AG04449 (cell line): ENCODE measurements at regions of chr17 and their contacts with region 1.

Region 1: DNA sequence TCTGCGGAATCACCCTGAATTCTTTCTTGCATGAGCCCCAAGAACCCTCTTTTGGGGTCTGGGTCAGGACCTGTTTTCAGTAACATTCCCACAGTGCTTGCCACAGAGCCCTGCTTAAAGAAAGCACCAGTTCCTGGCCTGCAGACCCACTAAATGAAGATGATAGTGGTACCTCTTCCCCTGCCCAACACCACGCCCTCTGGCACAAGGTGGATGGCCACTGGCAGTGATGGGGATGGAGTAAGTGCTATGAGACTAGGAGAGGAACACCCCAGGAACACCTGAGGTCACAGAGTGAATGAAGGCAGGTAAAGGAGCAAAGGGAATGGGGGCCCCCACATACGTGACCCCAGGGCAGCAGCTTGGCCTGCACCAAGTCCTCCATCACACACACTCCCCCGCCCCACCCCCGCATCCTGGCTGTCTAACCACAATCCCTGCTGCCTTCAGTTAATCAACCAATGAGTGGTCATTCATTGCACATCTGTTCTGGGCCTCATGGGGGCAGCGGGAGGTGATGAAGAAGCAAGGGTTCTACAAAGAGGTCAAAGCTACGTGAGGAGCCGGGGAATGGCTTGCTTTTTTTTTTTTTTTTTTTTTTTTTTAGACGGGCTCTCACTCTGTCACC is 3.9 kb upstream of the PPY start:
- DNase-seq: no peak
- H3K4me3 ChIP-seq: no peak overlapping the region
- CTCF ChIP-seq: no peak

Region 2: GRCh38 chr17:43645765-43646481 is 300.3 kb before region 1 on chr17:
- CTCF ChIA-PET with region 1: no interaction called
- POLR2A ChIA-PET with region 1: no interaction called
- DNase-seq: no peak
- H3K4me3 ChIP-seq: peak overlapping the region; percentile 27
- CTCF ChIP-seq: no peak

Region 3: GRCh38 chr17:43861024-43861621 is 85.1 kb before region 1 on chr17:
- CTCF ChIA-PET with region 1: no interaction called
- POLR2A ChIA-PET with region 1: no interaction called
- DNase-seq: no peak
- H3K4me3 ChIP-seq: no peak overlapping the region
- CTCF ChIP-seq: no peak

Region 4: GRCh38 chr17:43907425-43907981 is 38.7 kb before region 1 on chr17 and contains the start of gene MPP2:
- CTCF ChIA-PET with region 1: interaction called, 25 read pairs
- POLR2A ChIA-PET with region 1: no interaction called
- DNase-seq: no peak
- H3K4me3 ChIP-seq: peak within 1 kb of the TSS; percentile 74
- CTCF ChIP-seq: peak; percentile 32

Region 5: GRCh38 chr17:43958953-43959352 is 12.8 kb after region 1 on chr17:
- CTCF ChIA-PET with region 1: interaction called, 42 read pairs
- POLR2A ChIA-PET with region 1: no interaction called
- DNase-seq: no peak
- H3K4me3 ChIP-seq: no peak overlapping the region
- CTCF ChIP-seq: no peak

Region 6: DNA sequence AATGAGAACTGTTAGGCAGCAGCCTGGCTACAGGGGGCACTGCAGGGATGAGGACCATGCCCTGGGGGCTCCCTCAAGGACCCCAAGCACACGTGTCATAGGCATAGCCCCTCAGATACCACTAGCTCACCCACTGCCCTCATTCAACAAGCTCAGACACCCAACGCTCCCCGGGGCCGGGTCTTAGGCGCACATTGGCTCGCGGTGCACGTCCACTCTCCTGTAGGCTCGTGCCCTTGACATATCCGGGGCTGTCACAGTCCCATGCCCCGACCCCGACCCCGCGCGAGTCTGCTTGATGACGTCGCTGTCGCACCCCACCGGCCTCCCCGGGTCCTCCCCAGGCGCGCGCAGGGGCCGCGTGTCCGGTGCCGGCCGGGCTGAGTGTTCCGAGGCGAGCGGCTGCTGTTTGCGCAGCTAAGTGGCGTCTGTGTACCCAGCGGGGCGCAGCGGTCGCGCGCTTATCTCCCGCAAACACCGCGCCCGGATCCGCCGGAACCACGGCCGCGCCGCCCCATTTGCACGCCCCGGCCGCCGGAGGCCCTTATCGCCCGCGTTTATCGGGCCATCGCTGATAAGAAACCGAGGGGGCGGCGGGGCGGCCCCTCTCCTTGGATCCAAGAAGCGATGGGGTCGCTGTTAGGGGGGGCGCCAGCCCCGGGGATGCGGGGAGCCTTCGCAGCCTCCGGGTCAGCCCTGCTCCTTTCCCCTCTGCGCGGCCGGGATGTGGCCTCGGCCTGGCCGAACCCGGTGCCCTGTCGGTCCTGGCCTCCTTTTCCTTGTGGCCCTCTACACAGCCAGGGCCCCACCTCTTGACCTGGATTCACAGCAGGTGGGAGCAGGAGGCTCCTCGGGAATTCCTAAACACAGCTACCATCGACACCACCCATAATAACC is 37.6 kb after region 1 on chr17:
- CTCF ChIA-PET with region 1: interaction called, 34 read pairs
- POLR2A ChIA-PET with region 1: no interaction called
- DNase-seq: no peak
- H3K4me3 ChIP-seq: peak overlapping the region; percentile 43
- CTCF ChIP-seq: peak; percentile 16

Region 7: DNA sequence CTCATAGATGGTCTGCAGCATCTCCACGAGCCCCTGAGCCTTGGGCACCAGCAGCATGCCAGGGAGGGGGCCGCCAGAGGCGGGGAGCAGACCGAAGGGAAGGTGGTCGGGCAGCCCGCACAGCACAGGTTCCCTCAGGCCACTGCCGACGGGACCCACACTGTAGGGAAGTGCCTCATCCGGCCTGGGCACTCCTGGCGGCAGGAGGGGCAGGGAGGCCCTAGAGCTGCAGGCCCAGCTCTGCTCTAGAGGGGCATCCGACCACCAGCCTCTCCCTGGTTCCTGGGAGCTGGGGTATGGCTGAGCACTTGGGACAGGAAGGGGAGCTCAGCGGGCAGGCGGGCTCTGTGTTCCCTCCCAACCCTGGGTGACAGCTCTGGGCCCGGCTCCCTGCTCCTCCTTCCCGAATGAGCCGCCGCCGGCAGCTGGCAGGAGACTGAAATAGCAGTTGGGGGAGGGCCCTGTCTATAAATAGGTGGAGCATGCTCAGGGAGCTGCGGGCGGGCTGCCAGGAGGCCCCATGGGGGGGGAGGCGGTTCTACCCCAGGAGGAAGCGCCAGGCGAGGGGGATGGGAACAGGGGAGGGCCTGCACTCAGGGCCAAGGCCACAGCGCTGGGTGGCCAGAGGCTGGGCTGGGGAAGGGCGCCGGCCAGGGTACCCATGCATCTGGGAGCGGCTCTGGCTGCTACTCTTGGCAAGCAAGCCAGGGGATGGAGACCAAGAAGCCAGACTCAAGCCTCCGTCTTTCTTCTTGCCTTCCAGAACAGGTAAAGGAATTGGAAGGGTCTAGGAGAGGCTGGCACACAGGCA is 164.8 kb after region 1 on chr17:
- CTCF ChIA-PET with region 1: interaction called, 41 read pairs
- POLR2A ChIA-PET with region 1: no interaction called
- DNase-seq: peak; percentile 63
- H3K4me3 ChIP-seq: peak overlapping the region; percentile 67
- CTCF ChIP-seq: peak; percentile 6